ENCODE measurements at regions of chr4 and their contacts with region 1.

Region 1: GRCh38 chr4:1856042-1856788 is at the start of gene LETM1:
- DNase-seq: peak; percentile 84
- ATAC-seq: peak; percentile 94
- H3K4me3 ChIP-seq: peak within 1 kb of the TSS; percentile 90 to 96 (median 92)
- H3K27ac ChIP-seq: peak within 1 kb of the TSS; percentile 72
- H3K4me1 ChIP-seq: peaks cover 68% of the 10 kb centered on the region
- H3K27me3 ChIP-seq: no peaks in the 10 kb centered on the region; a peak in 1 of 5 replicates
- CTCF ChIP-seq: peak; percentile 20; the same call in 1 of the 2 replicates
- EP300 ChIP-seq: no peak; a peak in 1 of 4 replicates
- POLR2A ChIP-seq: peak in 1 of 2 experiments; percentile 58; a peak in 1 of 4 replicates
- RAD21 ChIP-seq: peak; percentile 55
- total RNA-seq, gene LETM1: 29.4 and 41.6 TPM in 2 replicates

Region 2: GRCh38 chr4:1834047-1834775 is 22.0 kb before region 1 on chr4:
- CTCF ChIA-PET with region 1: no interaction called
- POLR2A ChIA-PET with region 1: no interaction called
- in situ Hi-C with region 1: no loop called
- intact Hi-C with region 1: no loop called
- DNase-seq: no peak
- ATAC-seq: no peak
- H3K4me3 ChIP-seq: no peak overlapping the region
- H3K27ac ChIP-seq: no peak overlapping the region
- H3K4me1 ChIP-seq: peaks cover 21% of the 10 kb centered on the region
- H3K27me3 ChIP-seq: no peaks in the 10 kb centered on the region
- CTCF ChIP-seq: no peak
- EP300 ChIP-seq: no peak
- POLR2A ChIP-seq: no peak
- RAD21 ChIP-seq: no peak

Region 3: DNA sequence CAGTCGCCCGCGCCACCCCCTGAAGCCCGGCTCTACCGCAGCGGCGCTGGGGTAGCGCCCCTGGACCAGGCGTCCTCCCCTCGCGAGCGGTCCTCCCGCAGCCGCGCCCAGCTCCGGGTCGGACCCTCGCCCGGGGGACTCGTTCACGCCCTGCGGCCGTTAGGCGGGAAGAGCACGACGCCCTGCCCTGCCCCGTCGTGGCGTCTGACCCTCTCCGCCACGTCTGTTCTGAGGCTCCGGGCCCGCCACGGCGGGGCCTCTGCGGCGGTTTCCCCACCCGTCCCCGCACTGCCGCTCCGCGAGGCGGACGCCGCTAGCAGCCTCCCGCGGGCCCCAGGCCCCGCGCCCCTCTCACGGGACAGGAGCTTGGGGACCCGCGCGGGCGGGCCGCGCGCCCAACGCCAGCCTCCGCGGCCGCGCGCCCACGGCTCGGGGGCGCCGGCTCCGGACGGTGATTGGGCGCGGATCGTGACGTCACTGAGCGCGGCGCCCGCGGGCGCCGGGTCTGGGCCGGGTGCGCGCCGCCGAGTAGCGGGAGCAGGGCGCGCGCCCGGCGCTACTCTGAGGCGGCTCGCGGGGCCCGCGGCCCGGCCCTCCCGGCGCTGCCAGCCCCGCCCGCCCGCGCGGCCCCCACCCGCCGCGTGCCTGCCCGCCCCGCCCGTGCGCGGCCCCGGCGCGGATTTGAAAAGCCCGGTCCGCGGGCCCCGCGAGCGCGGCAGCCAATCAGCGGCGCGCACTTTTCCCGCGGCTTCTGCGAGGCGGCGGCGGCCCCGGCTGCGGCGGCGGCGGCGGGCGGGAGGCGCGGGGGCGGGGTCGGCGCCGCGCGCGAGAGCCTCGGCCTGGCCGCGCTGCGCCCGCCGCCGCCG is 14.6 kb after region 1 on chr4 and contains the start of gene NSD2:
- CTCF ChIA-PET with region 1: no interaction called
- POLR2A ChIA-PET with region 1: interaction called, 16 read pairs
- in situ Hi-C with region 1: no loop called
- intact Hi-C with region 1: loop called (anchors 2 kb)
- DNase-seq: peak; percentile 67
- ATAC-seq: peak; percentile 59
- H3K4me3 ChIP-seq: peak within 1 kb of the TSS; percentile 77 to 94 (median 92)
- H3K27ac ChIP-seq: peak within 1 kb of the TSS; percentile 99
- H3K4me1 ChIP-seq: peaks cover 74% of the 10 kb centered on the region
- H3K27me3 ChIP-seq: no peaks in the 10 kb centered on the region
- CTCF ChIP-seq: no peak
- EP300 ChIP-seq: no peak
- POLR2A ChIP-seq: peak in 1 of 2 experiments; percentile 63; a peak in 2 of 4 replicates
- RAD21 ChIP-seq: peak; percentile 71
- total RNA-seq, gene NSD2: 62.0 and 65.9 TPM in 2 replicates

Region 4: DNA sequence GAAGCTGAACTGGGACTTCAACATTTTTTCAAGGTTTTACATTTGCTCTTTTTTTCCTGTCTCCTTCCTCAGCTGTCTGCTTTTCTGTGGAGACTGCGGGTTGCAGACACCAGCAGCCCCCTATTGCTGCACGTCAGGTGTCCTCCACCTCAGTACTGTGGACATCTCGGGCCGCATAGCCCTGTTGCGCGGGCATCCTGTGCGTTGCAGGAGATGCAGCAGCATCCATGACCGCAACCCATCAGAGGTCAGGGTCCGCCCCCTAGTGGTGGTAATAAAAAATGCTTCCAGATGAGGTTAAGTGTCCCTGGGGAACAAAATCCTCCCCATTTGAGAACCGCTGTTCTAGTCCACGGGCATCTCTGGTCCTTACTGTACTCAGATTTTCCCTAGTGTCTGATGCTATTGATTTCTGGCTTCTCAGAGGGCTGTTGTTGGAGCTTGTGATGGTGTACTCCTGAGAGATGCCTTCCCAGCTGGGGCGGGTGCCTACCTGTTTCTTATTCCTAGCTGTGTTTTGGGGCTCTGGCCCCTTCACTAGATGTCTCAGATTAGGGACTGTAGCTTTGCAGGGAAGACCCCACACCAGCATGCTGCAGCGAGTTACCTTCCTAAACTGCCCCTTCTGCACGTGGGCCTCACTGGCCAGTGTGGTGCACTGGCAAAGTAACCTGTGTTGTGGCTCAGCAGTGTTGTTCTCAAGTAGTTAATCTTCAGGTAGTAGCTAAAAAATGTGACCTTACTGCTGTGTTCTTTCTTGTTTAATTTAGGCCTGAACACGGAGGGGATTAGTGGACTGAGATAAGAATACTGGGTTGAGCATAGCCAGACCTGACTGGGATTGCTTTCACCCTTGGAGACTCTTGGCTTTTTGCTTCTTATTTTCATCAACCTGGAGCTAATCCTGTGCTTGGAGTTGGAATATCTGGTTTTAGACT is 43.2 kb after region 1 on chr4:
- CTCF ChIA-PET with region 1: interaction called, 12 read pairs
- POLR2A ChIA-PET with region 1: interaction called, 4 read pairs
- in situ Hi-C with region 1: loop called (anchors 5 kb)
- intact Hi-C with region 1: loop called (anchors 2 kb)
- DNase-seq: peak; percentile 70
- ATAC-seq: peak; percentile 93
- H3K4me3 ChIP-seq: no peak overlapping the region
- H3K27ac ChIP-seq: no peak overlapping the region
- H3K4me1 ChIP-seq: peaks cover 53% of the 10 kb centered on the region
- H3K27me3 ChIP-seq: no peaks in the 10 kb centered on the region
- CTCF ChIP-seq: peak; percentile 93
- EP300 ChIP-seq: no peak
- POLR2A ChIP-seq: no peak
- RAD21 ChIP-seq: peak; percentile 92